Activated naive CD4-positive, alpha-beta T cell treated with anti-CD3 and anti-CD28 coated beads, Interleukin-2, amount 10 ng/mL, durations not matched to agents 7 days and 5 days (primary cell): ENCODE measurements at regions of chr19 and their contacts with region 1.

Region 1: DNA sequence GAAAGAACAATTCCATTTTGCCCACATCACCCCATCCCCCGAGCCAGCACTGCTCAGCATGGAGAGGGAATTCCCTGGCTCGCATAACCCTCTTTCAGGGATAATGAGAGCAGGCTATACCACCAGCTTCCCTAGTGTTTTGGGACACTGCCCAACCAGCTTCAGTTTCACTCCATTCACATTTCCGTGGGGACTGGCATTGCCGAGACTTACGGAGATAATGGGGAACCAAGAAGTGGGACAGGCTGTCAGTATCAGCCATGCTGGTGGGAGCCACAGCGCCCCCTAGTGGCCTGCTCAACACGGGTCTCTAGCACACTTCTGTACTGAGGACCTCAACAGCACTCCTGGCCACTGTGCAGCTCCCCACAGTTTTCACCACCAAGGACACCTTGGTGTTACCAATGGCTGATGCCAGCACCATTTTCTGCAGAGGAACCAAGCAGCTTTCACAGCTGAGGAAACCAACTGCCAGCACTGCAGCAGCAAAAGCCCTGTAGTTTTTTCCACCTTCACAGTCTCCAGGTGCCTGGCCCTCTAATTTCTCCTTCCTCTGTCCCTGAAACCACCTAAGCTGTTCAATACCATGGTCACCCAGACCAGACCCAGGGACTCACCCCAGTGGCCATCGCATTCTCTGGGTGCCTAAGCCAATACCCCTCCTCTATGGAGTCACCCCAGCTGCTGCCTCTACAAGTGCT is 23.7 kb downstream of the SLC6A16 start:
- DNase-seq: peak; percentile 89
- H3K4me3 Mint-ChIP-seq: no peak overlapping the region
- H3K27ac Mint-ChIP-seq: no peak overlapping the region
- H3K4me1 Mint-ChIP-seq: no peaks in the 10 kb centered on the region
- H3K27me3 Mint-ChIP-seq: peaks cover 26% of the 10 kb centered on the region

Region 2: DNA sequence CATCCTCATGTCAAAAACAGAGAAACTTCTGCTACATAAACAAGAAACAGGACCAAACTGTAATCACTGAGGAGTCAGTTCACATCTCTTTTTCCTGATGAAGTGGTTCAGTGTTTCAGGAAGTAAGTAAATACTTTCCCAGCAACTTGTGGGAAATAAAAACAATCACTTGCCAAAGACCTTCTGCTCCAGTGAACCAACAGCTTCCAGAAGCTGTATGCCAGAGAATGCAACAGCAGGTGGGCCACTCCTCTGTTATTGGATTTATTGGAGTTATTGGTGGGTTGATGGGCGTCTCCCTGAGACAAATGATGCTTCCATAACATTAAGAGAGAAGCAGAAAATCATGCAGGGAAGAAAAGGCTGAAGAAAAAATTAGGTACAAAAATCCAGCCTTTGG is 13.8 kb after region 1 on chr19:
- CTCF ChIA-PET with region 1: interaction called, 13 read pairs
- DNase-seq: no peak
- H3K4me3 Mint-ChIP-seq: no peak overlapping the region
- H3K27ac Mint-ChIP-seq: no peak overlapping the region
- H3K4me1 Mint-ChIP-seq: peaks cover 6% of the 10 kb centered on the region
- H3K27me3 Mint-ChIP-seq: no peaks in the 10 kb centered on the region

Region 3: DNA sequence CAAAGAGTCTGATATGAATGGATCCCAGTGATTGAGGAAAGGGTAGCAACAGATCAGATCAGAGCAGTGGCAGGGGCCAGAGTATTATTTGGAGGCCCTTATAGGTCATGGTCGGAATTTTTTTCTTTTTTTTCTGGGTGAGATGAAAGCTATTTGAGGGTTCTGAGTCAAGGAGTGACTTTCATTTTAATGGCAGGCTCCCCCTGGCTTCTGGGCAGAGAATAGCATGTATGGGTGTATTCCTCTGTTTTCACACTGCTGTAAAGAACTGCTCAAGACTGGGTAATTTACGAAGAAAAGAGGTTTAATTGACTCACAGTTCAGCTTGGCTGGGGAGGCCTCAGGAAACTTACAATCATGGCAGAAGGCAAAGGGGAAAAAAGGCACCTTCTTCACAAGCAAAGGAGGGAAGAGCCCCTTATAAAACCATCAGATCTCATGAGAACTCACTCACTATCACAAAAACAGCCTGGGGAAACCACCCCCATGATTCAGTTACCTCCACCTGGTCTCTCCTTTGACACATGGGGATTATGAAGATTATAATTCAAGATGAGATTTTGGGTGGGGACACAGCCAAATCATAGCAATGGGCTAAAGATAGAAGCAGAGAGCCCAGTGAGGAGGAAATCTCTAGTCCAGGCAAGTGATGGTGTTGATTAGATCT is 26.7 kb after region 1 on chr19:
- CTCF ChIA-PET with region 1: interaction called, 10 read pairs
- DNase-seq: peak; percentile 69
- H3K4me3 Mint-ChIP-seq: no peak overlapping the region
- H3K27ac Mint-ChIP-seq: peak overlapping the region; percentile 59
- H3K4me1 Mint-ChIP-seq: peaks cover 58% of the 10 kb centered on the region
- H3K27me3 Mint-ChIP-seq: no peaks in the 10 kb centered on the region

Region 4: DNA sequence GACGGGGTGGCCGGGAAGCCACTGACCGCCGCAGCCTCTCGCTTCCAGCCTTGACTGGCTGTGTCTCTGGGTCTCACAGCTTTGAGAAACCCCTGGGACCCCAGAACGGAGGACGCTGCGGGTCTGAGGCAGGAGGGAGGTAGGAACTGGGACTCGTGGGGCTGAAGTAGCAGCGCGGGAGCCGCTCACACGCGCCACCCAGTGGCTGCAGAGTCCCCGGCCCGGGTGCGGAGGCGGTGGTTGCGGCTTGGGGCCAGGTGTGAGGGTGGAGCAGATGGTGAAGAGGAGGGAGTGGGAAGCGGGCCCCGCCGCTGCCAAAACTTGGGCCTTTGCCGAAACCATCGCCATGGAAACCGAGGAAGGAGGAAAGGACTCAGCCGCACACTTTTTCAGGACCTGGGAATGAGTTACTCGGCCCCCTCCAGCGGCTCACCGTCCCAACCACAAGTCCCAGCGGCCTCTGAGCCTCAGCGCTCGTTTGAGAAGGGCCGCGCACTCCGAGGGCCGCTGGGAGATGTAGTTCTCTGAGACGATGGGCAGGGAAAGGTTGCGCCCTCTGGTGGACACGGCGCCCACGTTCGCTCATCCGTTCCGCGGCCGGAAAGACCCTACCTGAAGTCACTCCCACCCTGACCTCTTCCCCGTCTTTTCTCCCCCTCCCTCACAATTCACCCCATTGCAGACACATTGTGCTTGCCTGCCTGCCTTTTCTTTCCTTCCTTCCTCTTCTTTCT is 142.2 kb after region 1 on chr19:
- CTCF ChIA-PET with region 1: no interaction called
- DNase-seq: peak; percentile 95
- H3K4me3 Mint-ChIP-seq: peak overlapping the region; percentile 81
- H3K27ac Mint-ChIP-seq: peak overlapping the region; percentile 81
- H3K4me1 Mint-ChIP-seq: peaks cover 64% of the 10 kb centered on the region
- H3K27me3 Mint-ChIP-seq: peaks cover 55% of the 10 kb centered on the region